K562 (cell line): ENCODE measurements at regions of chr1 and their contacts with region 1.

Region 1: GRCh38 chr1:115879977-115880376 is 39.1 kb upstream of the NHLH2 start:
- DNase-seq: peak in 2 of 4 experiments; percentile 17 to 20
- ATAC-seq: peak; percentile 56; the same call in 1 of the 3 replicates
- H3K4me3 ChIP-seq: no peak overlapping the region
- H3K27ac ChIP-seq: no peak overlapping the region
- H3K4me1 ChIP-seq: no peaks in the 10 kb centered on the region
- H3K27me3 ChIP-seq: peaks cover 8 to 14% of the 10 kb centered on the region in 2 experiments; a peak in 3 of 5 replicates
- CTCF ChIP-seq: peak; percentile 34 to 42 (median 38); a peak in 4 of 6 replicates
- EP300 ChIP-seq: no peak
- POLR2A ChIP-seq: no peak
- RAD21 ChIP-seq: peak; percentile 44 to 53

Region 2: GRCh38 chr1:115865704-115866380 is 14.1 kb before region 1 on chr1:
- CTCF ChIA-PET with region 1: no interaction called
- POLR2A ChIA-PET with region 1: no interaction called
- in situ Hi-C with region 1: no loop called
- intact Hi-C with region 1: no loop called
- DNase-seq: no peak
- ATAC-seq: no peak
- H3K4me3 ChIP-seq: no peak overlapping the region
- H3K27ac ChIP-seq: no peak overlapping the region
- H3K4me1 ChIP-seq: no peaks in the 10 kb centered on the region
- H3K27me3 ChIP-seq: no peaks in the 10 kb centered on the region; a peak in 1 of 5 replicates
- CTCF ChIP-seq: no peak
- EP300 ChIP-seq: no peak
- POLR2A ChIP-seq: no peak
- RAD21 ChIP-seq: no peak

Region 3: GRCh38 chr1:115980998-115981993 is 101.3 kb after region 1 on chr1:
- CTCF ChIA-PET with region 1: no interaction called
- POLR2A ChIA-PET with region 1: no interaction called
- in situ Hi-C with region 1: no loop called
- intact Hi-C with region 1: loop called (anchors 10 kb)
- DNase-seq: peak; percentile 58 to 73 (median 67)
- ATAC-seq: peak; percentile 84
- H3K4me3 ChIP-seq: no peak overlapping the region
- H3K27ac ChIP-seq: no peak overlapping the region
- H3K4me1 ChIP-seq: peaks cover 0 to 6% of the 10 kb centered on the region in 2 experiments; a peak in 2 of 5 replicates
- H3K27me3 ChIP-seq: peaks cover 8 to 12% of the 10 kb centered on the region in 2 experiments; a peak in 4 of 5 replicates
- CTCF ChIP-seq: peak; percentile 80 to 91 (median 81)
- EP300 ChIP-seq: no peak
- POLR2A ChIP-seq: no peak
- RAD21 ChIP-seq: peak; percentile 89